ENCODE measurements at regions of chr12 and their contacts with region 1.

Region 1: GRCh38 chr12:6873094-6874014 is at the start of gene SPSB2:
- DNase-seq: peak; percentile 100
- ATAC-seq: peak; percentile 75
- H3K4me3 Mint-ChIP-seq: peak within 1 kb of the TSS; percentile 89
- H3K27ac Mint-ChIP-seq: peak within 1 kb of the TSS; percentile 96
- H3K4me1 Mint-ChIP-seq: peaks cover 44% of the 10 kb centered on the region
- H3K27me3 Mint-ChIP-seq: no peaks in the 10 kb centered on the region
- CTCF ChIP-seq: no peak
- total RNA-seq, gene SPSB2: 21.2 to 25.5 TPM (median 22.7 TPM) in 3 replicates

Region 2: GRCh38 chr12:6788972-6789924 is 84.1 kb before region 1 on chr12 and contains the start of gene CD4:
- CTCF ChIA-PET with region 1: no interaction called
- POLR2A ChIA-PET with region 1: no interaction called
- DNase-seq: no peak
- ATAC-seq: peak; percentile 65
- H3K4me3 Mint-ChIP-seq: no peak within 1 kb of the TSS
- H3K27ac Mint-ChIP-seq: no peak within 1 kb of the TSS
- H3K4me1 Mint-ChIP-seq: peaks cover 24% of the 10 kb centered on the region
- H3K27me3 Mint-ChIP-seq: peaks cover 13% of the 10 kb centered on the region
- CTCF ChIP-seq: no peak
- total RNA-seq, gene CD4: 2.5 to 3.3 TPM (median 2.7 TPM) in 3 replicates

Region 3: DNA sequence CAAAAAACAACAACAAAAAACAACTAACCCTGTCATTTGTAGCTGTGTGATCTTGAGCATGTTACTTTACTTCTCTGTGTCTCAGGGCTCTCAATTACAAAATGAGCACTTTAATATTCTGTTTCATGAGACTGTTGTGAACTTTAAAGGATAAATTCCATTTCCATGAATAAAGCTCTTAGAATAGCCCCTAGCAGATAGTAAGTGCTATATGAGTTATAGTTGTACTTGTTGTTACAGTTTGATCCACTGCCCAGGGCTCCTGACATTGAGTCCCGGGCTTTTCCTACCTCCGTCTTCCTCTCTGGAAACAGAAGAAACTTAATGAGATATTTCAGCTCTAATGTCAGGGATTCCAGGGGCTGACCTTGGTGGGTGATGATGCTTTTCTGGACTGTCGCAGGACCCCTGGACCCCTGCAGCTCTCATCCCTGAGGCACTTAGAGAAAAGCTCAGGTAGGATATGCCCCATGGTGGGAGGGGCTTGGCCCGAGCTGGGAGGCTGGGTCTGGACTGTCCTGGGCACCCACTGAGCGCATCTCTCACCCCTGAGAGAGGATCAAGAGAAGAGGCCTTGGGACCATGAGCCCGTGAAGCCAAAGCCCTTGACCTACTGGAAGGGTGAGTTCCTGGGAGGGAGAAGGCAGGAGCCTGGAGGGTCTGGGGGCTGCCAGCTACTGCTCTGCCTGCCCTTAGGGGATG is 40.0 kb before region 1 on chr12:
- CTCF ChIA-PET with region 1: interaction called, 15 read pairs
- POLR2A ChIA-PET with region 1: interaction called, 4 read pairs
- DNase-seq: no peak
- ATAC-seq: no peak
- H3K4me3 Mint-ChIP-seq: no peak overlapping the region
- H3K27ac Mint-ChIP-seq: no peak overlapping the region
- H3K4me1 Mint-ChIP-seq: peaks cover 18% of the 10 kb centered on the region
- H3K27me3 Mint-ChIP-seq: no peaks in the 10 kb centered on the region
- CTCF ChIP-seq: no peak

Region 4: GRCh38 chr12:6890789-6891645 is 17.7 kb after region 1 on chr12:
- CTCF ChIA-PET with region 1: interaction called, 83 read pairs
- POLR2A ChIA-PET with region 1: interaction called, 32 read pairs
- DNase-seq: peak; percentile 99
- ATAC-seq: peak; percentile 92
- H3K4me3 Mint-ChIP-seq: peak overlapping the region; percentile 71
- H3K27ac Mint-ChIP-seq: peak overlapping the region; percentile 99
- H3K4me1 Mint-ChIP-seq: peaks cover 33% of the 10 kb centered on the region
- H3K27me3 Mint-ChIP-seq: peaks cover 4% of the 10 kb centered on the region; the same call in 1 of the 2 replicates
- CTCF ChIP-seq: peak; percentile 35

Region 5: GRCh38 chr12:6927379-6928024 is 54.1 kb after region 1 on chr12 and contains the start of gene ATN1:
- CTCF ChIA-PET with region 1: interaction called, 81 read pairs
- POLR2A ChIA-PET with region 1: interaction called, 33 read pairs
- DNase-seq: peak; percentile 86
- ATAC-seq: peak; percentile 19
- H3K4me3 Mint-ChIP-seq: peak within 1 kb of the TSS; percentile 94
- H3K27ac Mint-ChIP-seq: peak within 1 kb of the TSS; percentile 98
- H3K4me1 Mint-ChIP-seq: peaks cover 58% of the 10 kb centered on the region
- H3K27me3 Mint-ChIP-seq: no peaks in the 10 kb centered on the region
- CTCF ChIP-seq: no peak
- total RNA-seq, gene ATN1: 80.0 to 87.1 TPM (median 80.5 TPM) in 3 replicates

Region 6: GRCh38 chr12:6965026-6965661 is 91.8 kb after region 1 on chr12:
- CTCF ChIA-PET with region 1: interaction called, 48 read pairs
- POLR2A ChIA-PET with region 1: interaction called, 10 read pairs
- DNase-seq: peak; percentile 85
- ATAC-seq: peak; percentile 25
- H3K4me3 Mint-ChIP-seq: peak overlapping the region; percentile 75
- H3K27ac Mint-ChIP-seq: peak overlapping the region; percentile 95
- H3K4me1 Mint-ChIP-seq: peaks cover 60% of the 10 kb centered on the region
- H3K27me3 Mint-ChIP-seq: no peaks in the 10 kb centered on the region
- CTCF ChIP-seq: peak; percentile 71

Region 7: DNA sequence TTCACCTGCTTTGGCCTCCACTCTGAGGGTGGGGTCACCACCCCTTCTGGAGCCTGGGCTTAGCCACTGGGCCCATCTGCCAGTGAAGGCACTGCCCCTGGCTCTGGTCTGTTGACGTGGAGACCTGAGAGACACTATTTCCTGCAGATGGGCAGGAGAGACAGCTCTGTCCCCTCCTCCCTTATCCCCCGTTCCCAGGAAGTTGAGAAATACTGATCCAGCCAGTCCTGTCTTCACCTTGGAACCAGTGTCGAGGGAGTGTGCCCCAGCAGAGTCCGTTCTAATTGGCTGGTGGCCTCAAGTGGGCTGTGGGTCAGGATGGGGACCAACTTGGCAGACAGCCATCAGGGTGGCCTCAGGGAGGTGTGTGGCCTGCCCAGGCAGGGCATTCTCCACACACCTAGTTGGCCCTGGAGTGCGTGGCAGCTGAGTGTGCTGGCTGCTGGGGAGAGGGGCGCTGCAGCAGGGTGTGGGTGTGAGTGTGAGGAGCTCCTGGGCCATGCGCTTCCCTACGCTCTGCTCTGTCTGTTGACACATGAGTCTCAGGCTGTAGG is 282.2 kb after region 1 on chr12:
- CTCF ChIA-PET with region 1: no interaction called
- POLR2A ChIA-PET with region 1: no interaction called
- DNase-seq: no peak
- ATAC-seq: peak; percentile 43; the same call in 1 of the 2 replicates
- H3K4me3 Mint-ChIP-seq: no peak overlapping the region
- H3K27ac Mint-ChIP-seq: no peak overlapping the region
- H3K4me1 Mint-ChIP-seq: no peaks in the 10 kb centered on the region
- H3K27me3 Mint-ChIP-seq: no peaks in the 10 kb centered on the region
- CTCF ChIP-seq: no peak

Measured in WTC11 (cell line).